Heart left ventricle (tissue), 16 donors: ENCODE measurements at regions of chrX and their contacts with region 1.

Region 1: GRCh38 chrX:69387567-69388487 is 116.3 kb upstream of the NALF2 start:
- DNase-seq: peak in 4 of 5 donors; percentile 22 to 51 (median 42)
- ATAC-seq: peak; percentile 61 to 81 (median 70)
- H3K4me3 ChIP-seq: no peak overlapping the region
- H3K27ac ChIP-seq: no peak overlapping the region
- H3K4me1 ChIP-seq: peaks cover 0 to 4% (median 0%) of the 10 kb centered on the region in 12 donors
- H3K27me3 ChIP-seq: peaks cover 0 to 26% (median 0%) of the 10 kb centered on the region in 9 donors
- CTCF ChIP-seq: peak; percentile 45 to 77 (median 65)
- POLR2A ChIP-seq: no peak

Region 2: GRCh38 chrX:68822641-68823410 is 565.0 kb before region 1 on chrX:
- intact Hi-C with region 1: loop called (anchors 2 to 10 kb)
- DNase-seq: peak in 4 of 5 donors; percentile 40 to 62 (median 54)
- ATAC-seq: peak; percentile 49 to 90 (median 86)
- H3K4me3 ChIP-seq: no peak overlapping the region
- H3K27ac ChIP-seq: no peak overlapping the region
- H3K4me1 ChIP-seq: peaks cover 0 to 5% (median 0%) of the 10 kb centered on the region in 12 donors
- H3K27me3 ChIP-seq: peaks cover 0 to 25% (median 0%) of the 10 kb centered on the region in 9 donors
- CTCF ChIP-seq: peak; percentile 34 to 70 (median 64)
- POLR2A ChIP-seq: no peak

Region 3: DNA sequence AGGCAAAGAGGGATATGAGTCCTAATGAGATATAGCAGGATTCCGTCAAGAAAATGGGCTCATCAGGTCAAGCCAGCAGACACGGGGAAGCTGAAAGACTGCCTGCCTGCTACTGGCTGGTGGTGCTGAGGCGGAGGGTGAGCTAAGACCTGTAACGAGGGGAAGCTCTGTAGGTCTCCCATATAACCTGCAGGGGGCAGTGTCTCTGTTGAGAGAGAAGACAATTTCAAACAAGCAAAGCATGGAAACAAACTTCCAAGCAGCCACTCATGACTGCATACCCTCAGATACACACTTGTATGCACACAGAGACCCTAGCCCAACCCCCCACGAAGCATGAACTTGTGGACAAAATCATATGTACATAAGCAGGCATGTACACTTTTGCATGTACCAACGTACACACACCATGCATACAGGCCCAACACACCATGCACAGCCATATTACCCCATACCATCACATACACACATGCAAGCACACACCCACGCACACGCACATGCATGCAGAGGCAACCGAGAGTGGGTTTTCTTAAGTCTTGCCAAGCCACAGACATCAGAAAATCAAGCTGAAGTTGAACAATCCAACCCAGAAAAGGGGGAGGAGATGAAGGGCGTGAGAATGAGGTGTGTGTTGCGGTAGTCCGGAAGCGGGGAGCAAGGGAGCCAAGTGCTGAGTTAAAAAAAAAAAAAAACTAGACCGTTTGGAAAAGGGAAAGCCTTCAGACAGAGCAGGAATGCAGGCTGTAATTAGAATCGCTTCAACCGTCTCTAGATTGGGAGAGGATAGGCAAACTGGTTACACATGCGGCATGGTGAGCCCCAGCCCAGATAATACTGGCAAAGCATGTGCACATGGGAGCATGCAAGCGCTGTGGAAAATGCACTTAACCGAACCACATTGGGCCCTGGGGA is 293.6 kb before region 1 on chrX:
- intact Hi-C with region 1: loop called in 1 of 10 experiments (anchors 10 kb)
- DNase-seq: peak in 2 of 5 donors; percentile 31 to 43
- ATAC-seq: peak in 3 of 4 donors; percentile 27 to 50 (median 30)
- H3K4me3 ChIP-seq: no peak overlapping the region
- H3K27ac ChIP-seq: no peak overlapping the region
- H3K4me1 ChIP-seq: no peaks in the 10 kb centered on the region
- H3K27me3 ChIP-seq: peaks cover 0 to 6% (median 0%) of the 10 kb centered on the region in 9 donors
- CTCF ChIP-seq: peak; percentile 23 to 62 (median 46)
- POLR2A ChIP-seq: no peak

Region 4: DNA sequence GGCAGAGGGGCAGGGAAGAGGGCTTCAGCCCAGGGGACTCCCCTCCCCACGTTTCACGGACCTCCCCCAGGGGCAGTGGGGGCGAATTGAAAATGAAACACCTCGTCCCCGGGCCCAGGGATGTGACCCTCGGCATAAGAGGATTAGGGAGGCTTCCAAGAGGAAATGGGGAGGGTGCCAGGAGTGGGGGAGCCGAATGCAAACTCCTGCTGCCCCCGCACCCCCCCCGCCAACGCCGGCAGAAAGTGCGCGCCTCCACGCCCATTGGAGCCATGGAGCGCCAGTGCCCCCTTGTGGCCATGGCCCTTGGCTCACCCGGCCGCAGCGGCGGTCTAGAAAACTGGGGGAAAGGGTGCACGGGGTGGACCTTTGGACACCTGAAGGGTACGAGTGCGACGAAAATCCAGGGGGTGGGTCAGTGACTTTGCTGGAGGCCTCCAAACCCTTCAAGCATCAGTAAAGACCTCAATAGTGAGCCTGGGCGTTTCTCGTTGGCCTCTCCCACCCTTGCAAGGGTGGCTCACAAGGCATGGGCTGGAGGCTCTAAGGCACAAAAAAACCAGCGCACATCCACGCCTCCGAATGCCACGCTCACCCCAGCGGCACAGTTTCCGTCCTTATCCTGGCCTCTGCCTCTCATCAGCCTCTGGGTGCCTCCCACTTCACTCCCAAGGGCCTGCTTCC is 101.8 kb before region 1 on chrX:
- intact Hi-C with region 1: loop called in 4 of 10 experiments (anchors 5 to 10 kb)
- DNase-seq: peak in 4 of 5 donors; percentile 52 to 73 (median 64)
- ATAC-seq: peak; percentile 67 to 86 (median 77)
- H3K4me3 ChIP-seq: peak overlapping the region in 11 of 12 donors; percentile 30 to 60 (median 46)
- H3K27ac ChIP-seq: peak overlapping the region in 3 of 12 donors; percentile 18 to 65 (median 38)
- H3K4me1 ChIP-seq: peaks cover 0 to 20% (median 5%) of the 10 kb centered on the region in 12 donors
- H3K27me3 ChIP-seq: peaks cover 0 to 25% (median 0%) of the 10 kb centered on the region in 9 donors
- CTCF ChIP-seq: peak; percentile 67 to 89 (median 81)
- POLR2A ChIP-seq: no peak

Region 5: DNA sequence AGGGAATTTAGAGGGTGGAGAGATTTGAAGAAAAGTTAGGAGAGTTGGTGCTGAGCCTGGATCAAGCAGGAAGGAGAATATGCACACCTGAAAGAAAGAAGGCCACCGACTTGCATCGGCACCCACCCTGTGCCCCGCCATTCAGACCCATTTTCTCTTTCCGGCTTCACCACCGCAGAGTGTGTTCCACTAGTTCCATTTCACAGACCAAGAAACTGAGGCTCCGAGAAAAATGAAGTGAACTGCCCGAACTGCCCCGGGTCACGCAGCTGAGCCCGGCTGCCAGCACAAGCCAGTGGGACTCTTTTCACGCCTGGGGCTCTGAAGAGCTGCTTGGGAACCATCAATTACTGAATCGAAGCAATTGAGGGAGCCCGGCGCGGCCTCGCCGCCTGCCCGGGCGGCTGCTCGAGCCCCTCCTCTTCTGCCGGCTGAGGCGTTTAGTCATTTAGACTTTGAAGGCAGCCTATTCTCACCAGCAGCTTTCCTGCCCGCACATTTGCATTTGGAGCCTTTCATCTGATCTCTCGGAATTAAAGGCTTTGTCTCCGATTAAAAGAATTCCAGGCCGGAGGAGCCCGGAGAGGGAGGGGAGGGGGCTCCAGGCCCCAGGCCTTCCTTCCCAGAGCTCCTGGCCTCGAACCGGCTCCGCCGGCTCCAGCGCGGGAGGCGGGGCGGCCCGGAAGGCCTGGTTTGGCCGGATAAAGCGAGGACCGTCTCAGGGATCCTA is 82.3 kb before region 1 on chrX:
- intact Hi-C with region 1: loop called in 1 of 10 experiments (anchors 10 kb)
- DNase-seq: no peak
- ATAC-seq: no peak
- H3K4me3 ChIP-seq: no peak overlapping the region
- H3K27ac ChIP-seq: no peak overlapping the region
- H3K4me1 ChIP-seq: no peaks in the 10 kb centered on the region
- H3K27me3 ChIP-seq: peaks cover 0 to 35% (median 0%) of the 10 kb centered on the region in 9 donors
- CTCF ChIP-seq: no peak
- POLR2A ChIP-seq: no peak